Activated T-helper 1 cell treated with anti-CD3 and anti-CD28 coated beads, Interleukin-12 subunit alpha, Interleukin-12 subunit beta, Interleukin-2, Interleukin-4 antibody, amounts not matched to agents 30 ng/mL and 10 ng/mL and 1 ng/mL, durations not matched to agents 14 hours and 24 hours and 36 hours (primary cell): ENCODE measurements at regions of chr2 and their contacts with region 1.

Region 1: DNA sequence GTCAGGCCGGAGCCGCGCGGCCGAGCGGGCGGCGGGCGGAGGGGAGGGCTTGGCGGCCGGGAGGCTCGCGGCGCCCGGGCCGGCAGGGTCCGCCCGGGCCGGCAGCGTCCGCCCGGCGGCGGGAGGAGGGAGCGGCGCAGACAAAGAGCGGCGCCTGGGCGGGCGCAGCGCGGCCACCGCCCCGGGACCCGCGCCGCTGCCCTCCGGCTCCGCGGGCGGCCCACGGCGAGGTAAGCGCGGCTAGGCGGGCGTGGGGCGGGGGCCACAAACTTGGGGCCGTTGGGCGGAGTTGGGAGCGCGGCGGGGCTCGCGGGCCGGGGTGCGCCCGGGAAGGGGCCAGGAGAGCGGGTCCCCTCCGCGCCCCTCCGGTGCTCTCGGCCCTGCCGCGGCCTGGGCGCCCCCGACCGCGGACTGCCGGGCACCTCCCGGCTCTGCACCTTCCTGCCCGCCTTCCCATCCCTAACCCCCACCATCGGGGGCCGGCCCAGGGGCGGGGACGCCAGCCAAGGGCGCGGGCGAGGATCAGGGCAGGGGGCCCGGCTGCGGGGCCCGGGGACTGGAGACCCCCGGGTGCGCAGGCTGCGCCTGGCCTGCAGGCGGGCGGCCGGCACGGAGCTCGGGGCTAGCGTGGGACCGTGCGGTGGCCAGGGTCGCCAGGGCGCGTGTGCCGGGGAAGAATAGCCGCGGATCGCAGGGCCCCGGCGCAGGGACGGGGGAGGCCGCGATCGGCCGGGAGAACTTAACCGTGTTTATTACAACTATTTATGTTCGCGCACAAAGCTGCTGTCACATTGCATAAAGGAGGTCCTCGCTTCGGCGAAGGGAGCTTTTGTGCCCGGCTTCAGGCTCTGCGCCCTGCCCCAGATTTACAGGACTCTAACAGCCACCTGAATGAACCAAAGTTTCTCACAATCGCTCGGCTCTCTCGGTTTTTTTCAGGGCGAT is at the start of gene NCK2:
- DNase-seq: no peak
- H3K4me3 Mint-ChIP-seq: peak within 1 kb of the TSS; percentile 93
- H3K27ac Mint-ChIP-seq: peak within 1 kb of the TSS; percentile 94
- H3K4me1 Mint-ChIP-seq: peaks cover 84% of the 10 kb centered on the region
- H3K27me3 Mint-ChIP-seq: no peaks in the 10 kb centered on the region
- total RNA-seq, gene NCK2: 79.9 and 86.8 TPM in 2 replicates

Region 2: GRCh38 chr2:105398699-105399432 is 346.3 kb before region 1 on chr2 and contains the start of gene FHL2:
- intact Hi-C with region 1: loop called (anchors 5 kb)
- DNase-seq: peak; percentile 65
- H3K4me3 Mint-ChIP-seq: peak within 1 kb of the TSS; percentile 82
- H3K27ac Mint-ChIP-seq: peak within 1 kb of the TSS; percentile 54
- H3K4me1 Mint-ChIP-seq: peaks cover 4% of the 10 kb centered on the region
- H3K27me3 Mint-ChIP-seq: peaks cover 39% of the 10 kb centered on the region
- total RNA-seq, gene FHL2: 2.3 and 2.6 TPM in 2 replicates

Region 3: DNA sequence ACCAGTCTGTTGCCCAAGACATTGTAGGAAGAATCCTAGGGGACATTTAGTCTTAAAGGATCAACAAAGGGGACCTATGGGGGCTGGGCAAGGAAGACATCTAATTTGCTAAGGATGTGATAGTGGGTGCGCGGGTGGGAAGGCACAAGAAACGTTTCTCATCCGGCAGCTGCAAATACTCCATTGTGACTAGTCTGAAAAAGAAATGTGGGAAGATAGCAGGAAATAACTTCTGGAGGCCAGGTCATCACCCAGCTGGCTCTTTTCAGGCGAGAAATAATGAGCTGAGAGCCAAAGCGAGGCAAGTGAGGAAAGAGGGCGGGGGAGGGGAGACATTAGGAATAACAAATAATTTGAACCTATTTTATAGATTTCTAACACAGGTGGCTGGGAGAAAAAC is 70.8 kb before region 1 on chr2:
- intact Hi-C with region 1: loop called (anchors 2 kb)
- DNase-seq: no peak
- H3K4me3 Mint-ChIP-seq: no peak overlapping the region
- H3K27ac Mint-ChIP-seq: no peak overlapping the region
- H3K4me1 Mint-ChIP-seq: peaks cover 19% of the 10 kb centered on the region
- H3K27me3 Mint-ChIP-seq: no peaks in the 10 kb centered on the region

Region 4: DNA sequence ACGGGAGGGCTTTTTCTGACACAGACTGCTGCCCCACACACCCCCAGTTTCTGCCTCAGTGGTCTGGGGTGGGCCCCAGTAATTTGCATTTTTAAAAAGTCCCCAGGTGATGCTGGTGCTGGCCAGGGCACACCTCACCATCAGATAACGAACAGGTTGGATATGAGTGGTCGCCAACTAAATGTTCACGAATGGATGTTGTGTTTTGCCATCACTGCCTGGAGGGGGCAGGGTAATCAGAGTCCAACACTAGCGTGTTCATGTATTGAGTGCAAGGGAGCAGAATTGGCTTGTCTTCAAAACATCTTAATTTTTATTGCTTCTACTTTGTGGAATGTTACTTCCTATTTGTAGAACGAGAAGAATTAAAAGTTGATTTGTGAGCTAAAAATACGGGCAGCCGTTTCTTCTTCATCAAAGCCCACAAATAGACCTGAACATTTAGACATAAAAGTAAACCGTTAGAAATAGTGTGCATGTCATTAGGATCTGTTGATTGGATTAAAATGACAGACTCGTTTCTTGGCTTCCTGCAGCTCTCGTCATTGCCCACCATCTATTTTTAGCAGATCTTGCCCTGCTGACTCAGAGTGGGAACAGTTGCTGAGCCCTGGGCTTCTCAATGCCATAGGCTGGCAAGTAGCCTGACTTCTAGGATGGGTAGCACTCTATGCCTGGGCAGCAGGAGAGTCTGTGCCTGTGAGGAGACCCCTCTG is 44.7 kb after region 1 on chr2:
- intact Hi-C with region 1: loop called (anchors 1 kb)
- DNase-seq: peak; percentile 66
- H3K4me3 Mint-ChIP-seq: peak overlapping the region; percentile 66
- H3K27ac Mint-ChIP-seq: peak overlapping the region; percentile 92
- H3K4me1 Mint-ChIP-seq: peaks cover 85% of the 10 kb centered on the region
- H3K27me3 Mint-ChIP-seq: no peaks in the 10 kb centered on the region

Region 5: GRCh38 chr2:105836840-105837692 is 91.9 kb after region 1 on chr2:
- intact Hi-C with region 1: loop called (anchors 1 kb)
- DNase-seq: no peak
- H3K4me3 Mint-ChIP-seq: peak overlapping the region; percentile 44
- H3K27ac Mint-ChIP-seq: peak overlapping the region; percentile 61
- H3K4me1 Mint-ChIP-seq: peaks cover 89% of the 10 kb centered on the region
- H3K27me3 Mint-ChIP-seq: no peaks in the 10 kb centered on the region

Region 6: GRCh38 chr2:105864262-105864661 is 119.1 kb after region 1 on chr2:
- intact Hi-C with region 1: no loop called
- DNase-seq: no peak
- H3K4me3 Mint-ChIP-seq: no peak overlapping the region
- H3K27ac Mint-ChIP-seq: peak overlapping the region; percentile 64
- H3K4me1 Mint-ChIP-seq: peaks cover 77% of the 10 kb centered on the region
- H3K27me3 Mint-ChIP-seq: no peaks in the 10 kb centered on the region

Region 7: DNA sequence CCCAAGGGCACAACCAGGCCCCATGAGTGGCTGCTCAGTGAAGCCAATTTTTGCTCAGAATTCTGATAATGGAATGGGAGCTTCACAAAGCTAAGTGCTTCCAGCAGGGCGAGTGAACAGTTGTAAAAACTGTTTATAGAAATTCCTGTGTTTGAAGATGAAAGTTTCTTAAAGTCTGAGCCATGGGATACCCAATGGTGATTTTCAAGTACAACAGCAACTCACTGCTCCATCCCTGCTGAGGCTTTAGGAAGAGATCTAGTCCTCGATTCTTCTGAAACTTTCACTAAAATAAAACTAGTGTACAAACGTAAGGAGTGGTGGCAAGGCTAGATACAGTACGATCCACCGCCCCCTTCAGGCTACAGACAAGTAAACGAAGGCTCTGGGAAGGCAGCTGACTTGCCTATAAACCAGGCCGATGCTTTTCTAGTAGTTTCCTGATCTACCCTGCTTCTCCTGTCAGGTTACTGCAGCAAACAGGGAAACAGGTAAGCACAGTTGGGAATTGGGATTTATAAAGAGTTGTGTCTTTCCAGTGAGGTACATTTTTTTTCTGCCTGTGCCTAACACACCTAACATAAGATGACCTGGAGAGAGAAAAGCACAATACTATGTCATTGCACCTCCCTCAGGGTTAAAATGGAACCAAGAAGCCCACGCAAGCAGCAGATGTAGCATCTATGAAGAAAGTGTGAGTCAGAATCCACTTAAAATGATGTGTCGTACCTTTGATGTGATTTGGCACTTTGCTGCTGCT is 340.2 kb after region 1 on chr2:
- intact Hi-C with region 1: loop called (anchors 2 kb)
- DNase-seq: peak; percentile 41
- H3K4me3 Mint-ChIP-seq: peak overlapping the region; percentile 38
- H3K27ac Mint-ChIP-seq: peak overlapping the region; percentile 76
- H3K4me1 Mint-ChIP-seq: peaks cover 18% of the 10 kb centered on the region
- H3K27me3 Mint-ChIP-seq: no peaks in the 10 kb centered on the region

Region 8: DNA sequence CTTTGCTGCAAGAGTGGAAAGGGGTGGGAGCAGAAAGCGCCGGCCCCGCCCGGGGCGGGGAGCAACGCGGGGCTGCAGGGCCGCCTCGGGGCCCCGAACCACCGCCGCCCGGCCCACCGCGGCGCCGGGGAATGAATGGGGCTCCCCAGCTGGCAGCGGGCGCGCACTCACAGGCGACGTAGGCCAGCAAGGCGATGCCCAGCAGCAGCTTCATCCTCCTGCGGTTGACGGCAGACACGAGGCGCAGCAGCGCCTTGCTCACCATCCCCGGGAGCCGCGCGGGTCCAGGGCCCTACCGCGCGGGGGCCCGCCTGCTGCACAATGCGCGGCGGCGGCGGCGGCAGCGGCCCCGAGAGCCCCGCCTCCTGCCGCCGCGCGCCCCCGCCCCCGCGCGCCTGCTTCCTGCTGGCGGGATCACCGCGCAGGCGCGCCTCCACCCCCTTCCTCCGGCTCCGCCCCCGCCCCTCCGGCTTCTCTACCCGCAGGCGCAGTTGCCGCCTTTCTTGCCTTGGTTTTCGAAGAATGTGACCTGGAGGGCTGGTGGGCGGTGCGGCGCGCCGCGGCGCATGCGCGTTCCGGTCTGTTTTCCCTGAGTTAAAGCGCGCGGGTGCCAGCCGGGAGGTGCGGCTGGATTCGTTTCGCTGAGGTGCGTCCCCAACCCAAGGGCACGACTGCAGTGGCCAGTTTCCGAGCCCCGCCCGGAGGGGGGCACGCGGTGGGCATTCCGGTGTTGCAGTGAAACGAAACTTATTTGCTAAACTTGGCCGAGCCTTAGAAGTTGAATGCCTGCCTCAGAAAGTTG is 449.0 kb after region 1 on chr2 and contains the start of gene UXS1:
- intact Hi-C with region 1: loop called (anchors 1 kb)
- DNase-seq: peak; percentile 95
- H3K4me3 Mint-ChIP-seq: peak within 1 kb of the TSS; percentile 86
- H3K27ac Mint-ChIP-seq: peak within 1 kb of the TSS; percentile 92
- H3K4me1 Mint-ChIP-seq: peaks cover 46% of the 10 kb centered on the region
- H3K27me3 Mint-ChIP-seq: peaks cover 5% of the 10 kb centered on the region
- total RNA-seq, gene UXS1: 36.7 TPM in 2 replicates